GM12878 (cell line): ENCODE measurements at regions of chr4 and their contacts with region 1.

Region 1: GRCh38 chr4:73653695-73654106 is 33.5 kb upstream of the RASSF6 start:
- DNase-seq: peak; percentile 43
- ATAC-seq: peak; percentile 91
- H3K4me3 ChIP-seq: no peak overlapping the region
- H3K27ac ChIP-seq: no peak overlapping the region
- H3K4me1 ChIP-seq: no peaks in the 10 kb centered on the region
- H3K27me3 ChIP-seq: no peaks in the 10 kb centered on the region
- CTCF ChIP-seq: peak; percentile 45 to 62 (median 45); a peak in 4 of 6 replicates
- EP300 ChIP-seq: peak in 1 of 2 experiments; percentile 58; a peak in 1 of 4 replicates
- POLR2A ChIP-seq: no peak
- RAD21 ChIP-seq: peak; percentile 90

Region 2: GRCh38 chr4:73055241-73055897 is 598.3 kb before region 1 on chr4:
- CTCF ChIA-PET with region 1: no interaction called
- POLR2A ChIA-PET with region 1: no interaction called
- RAD21 ChIA-PET with region 1: no interaction called
- SMC1A ChIA-PET with region 1: no interaction called
- in situ Hi-C with region 1: no loop called
- intact Hi-C with region 1: no loop called
- DNase-seq: no peak
- ATAC-seq: peak; percentile 83
- H3K4me3 ChIP-seq: no peak overlapping the region
- H3K27ac ChIP-seq: no peak overlapping the region; the same call in 1 of the 2 replicates
- H3K4me1 ChIP-seq: peaks cover 8% of the 10 kb centered on the region; the same call in 1 of the 2 replicates
- H3K27me3 ChIP-seq: no peaks in the 10 kb centered on the region
- CTCF ChIP-seq: no peak
- EP300 ChIP-seq: no peak
- POLR2A ChIP-seq: no peak
- RAD21 ChIP-seq: no peak

Region 3: DNA sequence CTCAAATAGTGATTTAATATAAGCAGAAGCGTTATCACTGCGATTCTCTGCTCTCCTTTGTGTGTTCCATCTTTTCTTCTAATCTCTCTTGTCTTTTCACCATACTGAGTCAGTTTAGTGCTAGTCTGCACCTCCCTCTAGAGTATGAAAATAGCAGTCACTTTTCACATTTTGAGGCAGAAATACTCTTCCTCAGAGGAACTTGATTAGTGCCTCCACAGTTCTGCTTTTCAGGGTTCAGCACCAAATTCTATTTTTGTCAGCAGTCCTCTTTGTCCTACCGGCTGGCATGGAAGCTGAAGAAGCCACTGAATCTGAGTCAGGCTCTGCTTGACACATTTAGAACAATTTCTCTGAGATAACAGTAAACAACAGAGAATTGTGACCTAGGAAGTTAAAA is 345.4 kb before region 1 on chr4:
- CTCF ChIA-PET with region 1: interaction called, 15 read pairs
- POLR2A ChIA-PET with region 1: no interaction called
- RAD21 ChIA-PET with region 1: interaction called, 18 read pairs
- SMC1A ChIA-PET with region 1: interaction called, 9 read pairs
- in situ Hi-C with region 1: loop called (anchors 10 kb)
- intact Hi-C with region 1: loop called (anchors 2 kb)
- DNase-seq: no peak
- ATAC-seq: peak; percentile 57
- H3K4me3 ChIP-seq: no peak overlapping the region
- H3K27ac ChIP-seq: no peak overlapping the region
- H3K4me1 ChIP-seq: no peaks in the 10 kb centered on the region
- H3K27me3 ChIP-seq: no peaks in the 10 kb centered on the region
- CTCF ChIP-seq: peak; percentile 29 to 54 (median 32); a peak in 4 of 6 replicates
- EP300 ChIP-seq: no peak
- POLR2A ChIP-seq: no peak
- RAD21 ChIP-seq: peak; percentile 78

Region 4: GRCh38 chr4:73446336-73446938 is 207.3 kb before region 1 on chr4:
- CTCF ChIA-PET with region 1: interaction called, 23 read pairs
- POLR2A ChIA-PET with region 1: no interaction called
- RAD21 ChIA-PET with region 1: interaction called, 3 read pairs
- SMC1A ChIA-PET with region 1: interaction called, 8 read pairs
- in situ Hi-C with region 1: loop called (anchors 10 kb)
- intact Hi-C with region 1: loop called (anchors 5 kb)
- DNase-seq: no peak
- ATAC-seq: peak; percentile 97
- H3K4me3 ChIP-seq: no peak overlapping the region
- H3K27ac ChIP-seq: no peak overlapping the region
- H3K4me1 ChIP-seq: no peaks in the 10 kb centered on the region
- H3K27me3 ChIP-seq: no peaks in the 10 kb centered on the region; a peak in 1 of 4 replicates
- CTCF ChIP-seq: peak; percentile 74 to 86 (median 85)
- EP300 ChIP-seq: no peak
- POLR2A ChIP-seq: no peak
- RAD21 ChIP-seq: peak; percentile 70

Region 5: GRCh38 chr4:73593631-73594241 is 60.0 kb before region 1 on chr4:
- CTCF ChIA-PET with region 1: interaction called, 149 read pairs
- POLR2A ChIA-PET with region 1: interaction called, 4 read pairs
- RAD21 ChIA-PET with region 1: interaction called, 93 read pairs
- SMC1A ChIA-PET with region 1: interaction called, 132 read pairs
- in situ Hi-C with region 1: no loop called
- intact Hi-C with region 1: loop called (anchors 1 kb)
- DNase-seq: no peak
- ATAC-seq: no peak
- H3K4me3 ChIP-seq: no peak overlapping the region
- H3K27ac ChIP-seq: no peak overlapping the region
- H3K4me1 ChIP-seq: peaks cover 23% of the 10 kb centered on the region
- H3K27me3 ChIP-seq: no peaks in the 10 kb centered on the region
- CTCF ChIP-seq: peak; percentile 43 to 49 (median 48); a peak in 5 of 6 replicates
- EP300 ChIP-seq: no peak
- POLR2A ChIP-seq: no peak
- RAD21 ChIP-seq: peak; percentile 59

Region 6: GRCh38 chr4:73620115-73620792 is 33.4 kb before region 1 on chr4 and contains the start of gene RASSF6:
- CTCF ChIA-PET with region 1: interaction called, 9 read pairs
- POLR2A ChIA-PET with region 1: no interaction called
- RAD21 ChIA-PET with region 1: interaction called, 4 read pairs
- SMC1A ChIA-PET with region 1: interaction called, 12 read pairs
- in situ Hi-C with region 1: loop called (anchors 5 kb)
- intact Hi-C with region 1: no loop called
- DNase-seq: no peak
- ATAC-seq: peak; percentile 91
- H3K4me3 ChIP-seq: peak within 1 kb of the TSS; percentile 61
- H3K27ac ChIP-seq: no peak within 1 kb of the TSS
- H3K4me1 ChIP-seq: no peaks in the 10 kb centered on the region
- H3K27me3 ChIP-seq: no peaks in the 10 kb centered on the region
- CTCF ChIP-seq: no peak
- EP300 ChIP-seq: no peak
- POLR2A ChIP-seq: no peak
- RAD21 ChIP-seq: no peak
- polyA plus RNA-seq, gene RASSF6: 0.35 to 0.40 TPM